OCI-LY7 (cell line): ENCODE measurements at regions of chr15 and their contacts with region 1.

Region 1: GRCh38 chr15:34927726-34928125 is 41.8 kb downstream of the AQR start:
- DNase-seq: no peak
- H3K4me3 ChIP-seq: no peak overlapping the region
- H3K27ac ChIP-seq: no peak overlapping the region
- H3K4me1 ChIP-seq: no peaks in the 10 kb centered on the region
- CTCF ChIP-seq: no peak

Region 2: DNA sequence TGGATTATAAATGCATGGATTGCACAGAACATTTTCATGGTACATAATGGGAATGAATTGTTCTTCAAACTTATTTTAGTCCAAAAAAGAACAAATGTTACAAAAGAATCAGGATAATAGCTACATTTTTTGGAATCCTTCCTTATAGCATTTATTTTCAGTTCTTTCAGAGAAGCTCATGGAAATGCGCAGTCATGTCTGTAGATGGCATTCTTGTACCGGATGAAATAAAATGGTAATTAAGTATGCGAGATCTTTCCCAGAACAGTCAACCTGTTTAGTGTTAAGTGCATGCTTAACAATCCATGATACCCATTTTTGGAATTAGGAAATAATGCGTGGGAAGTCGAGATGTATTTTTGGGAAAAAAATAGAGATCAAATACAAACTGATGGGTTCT is 306.1 kb before region 1 on chr15:
- CTCF ChIA-PET with region 1: no interaction called
- POLR2A ChIA-PET with region 1: no interaction called
- intact Hi-C with region 1: loop called (anchors 10 kb)
- DNase-seq: no peak
- H3K4me3 ChIP-seq: no peak overlapping the region
- H3K27ac ChIP-seq: no peak overlapping the region
- H3K4me1 ChIP-seq: peaks cover 6% of the 10 kb centered on the region
- CTCF ChIP-seq: peak; percentile 52

Region 3: DNA sequence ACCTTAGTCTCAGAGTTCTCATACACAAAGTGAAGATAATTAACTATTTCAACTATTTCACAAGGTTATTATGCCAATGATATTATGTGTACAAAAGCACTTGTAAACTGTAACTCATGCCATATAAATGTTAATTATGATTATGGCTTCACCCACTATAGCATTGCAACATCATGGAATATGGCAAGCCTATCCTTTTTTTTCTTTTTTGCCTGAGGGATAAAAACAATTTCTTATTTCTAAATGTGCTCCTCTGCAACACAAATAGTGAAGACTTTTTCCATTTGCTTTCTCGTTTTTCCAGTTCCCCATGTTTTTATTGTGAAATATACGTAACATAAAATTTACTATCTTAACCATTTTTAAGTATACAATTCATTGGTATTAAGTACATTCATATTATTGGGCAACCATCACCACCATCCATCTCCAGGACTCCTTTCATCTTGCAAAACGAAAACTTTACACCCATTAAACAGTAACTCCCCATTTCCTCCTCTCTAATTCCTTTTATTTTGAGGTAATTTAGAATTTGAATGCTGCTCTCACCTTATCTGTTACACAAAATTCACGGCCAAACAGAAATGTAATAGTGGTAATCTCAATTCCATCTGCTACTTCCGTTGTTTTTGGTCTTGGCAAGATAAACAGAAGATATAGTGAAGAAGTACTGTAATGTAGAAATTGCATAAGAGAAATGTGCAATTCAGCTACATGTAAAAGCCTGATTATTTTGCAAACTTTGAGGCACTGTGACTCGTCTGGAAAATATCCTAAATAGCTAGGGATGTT is 111.1 kb after region 1 on chr15:
- CTCF ChIA-PET with region 1: no interaction called
- POLR2A ChIA-PET with region 1: no interaction called
- intact Hi-C with region 1: no loop called
- DNase-seq: no peak
- H3K4me3 ChIP-seq: no peak overlapping the region
- H3K27ac ChIP-seq: no peak overlapping the region
- H3K4me1 ChIP-seq: no peaks in the 10 kb centered on the region
- CTCF ChIP-seq: no peak